Colonic mucosa (tissue), 4 donors: ENCODE measurements at regions of chr1 and their contacts with region 1.

Region 1: DNA sequence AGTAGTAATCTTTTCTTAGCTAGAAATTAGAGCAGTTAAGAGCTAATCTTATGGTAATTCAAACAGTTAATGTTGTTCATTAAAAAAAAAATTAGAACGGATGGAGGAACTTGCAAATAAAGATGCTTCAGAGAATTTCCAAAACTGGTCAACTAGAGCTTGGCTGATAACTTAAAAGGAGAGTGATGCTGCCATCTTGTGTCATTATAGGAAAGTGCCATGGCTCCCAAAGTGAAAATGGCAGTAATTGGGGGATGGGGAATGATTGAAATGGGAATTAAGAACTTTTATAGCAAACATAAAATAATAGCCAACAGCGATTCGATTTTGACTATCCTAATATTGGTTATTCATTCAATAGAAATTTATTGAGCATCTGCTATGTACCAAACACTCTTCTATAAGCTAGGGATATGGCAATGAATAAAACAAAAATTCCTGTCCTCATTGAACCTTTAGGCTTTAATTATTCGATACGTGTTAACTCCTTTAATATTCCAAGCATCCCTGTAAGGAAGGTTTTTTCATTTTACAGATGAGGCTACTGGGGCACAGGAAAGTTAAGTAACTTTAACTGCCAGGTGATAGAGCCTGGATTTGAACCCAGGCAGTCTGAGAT is 5.7 kb upstream of the PLPP3 start:
- DNase-seq: peak; percentile 43
- H3K4me3 ChIP-seq: no peak overlapping the region
- H3K27ac ChIP-seq: no peak overlapping the region
- H3K4me1 ChIP-seq: no peaks in the 10 kb centered on the region
- H3K27me3 ChIP-seq: no peaks in the 10 kb centered on the region
- CTCF ChIP-seq: peak; percentile 78

Region 2: DNA sequence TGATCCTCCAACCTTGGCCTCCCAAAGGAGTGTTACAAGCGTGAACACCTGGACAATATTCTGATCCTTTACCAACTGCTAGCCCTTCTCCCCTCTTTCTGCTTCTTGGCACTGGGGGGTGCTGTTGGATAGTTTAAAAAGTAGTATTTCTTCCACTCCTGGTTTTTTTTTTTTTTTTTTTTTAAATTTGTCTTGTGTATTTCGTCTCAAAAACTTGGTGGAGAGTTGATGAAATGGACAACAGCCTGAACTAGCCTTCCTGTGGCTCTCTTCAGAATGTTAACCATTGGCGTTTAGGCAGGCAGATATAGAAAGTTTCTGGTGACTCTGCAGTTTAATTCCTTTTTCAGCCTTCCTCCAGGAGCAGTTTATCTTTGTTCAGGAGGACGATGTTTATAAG is 1300.2 kb before region 1 on chr1:
- intact Hi-C with region 1: loop called (anchors 5 kb)
- DNase-seq: peak; percentile 37
- H3K4me3 ChIP-seq: no peak overlapping the region
- H3K27ac ChIP-seq: no peak overlapping the region
- H3K4me1 ChIP-seq: no peaks in the 10 kb centered on the region
- H3K27me3 ChIP-seq: no peaks in the 10 kb centered on the region
- CTCF ChIP-seq: peak; percentile 38

Region 3: GRCh38 chr1:55375617-55376258 is 1209.3 kb before region 1 on chr1:
- intact Hi-C with region 1: loop called (anchors 5 kb)
- DNase-seq: peak; percentile 55
- H3K4me3 ChIP-seq: no peak overlapping the region
- H3K27ac ChIP-seq: no peak overlapping the region
- H3K4me1 ChIP-seq: no peaks in the 10 kb centered on the region
- H3K27me3 ChIP-seq: no peaks in the 10 kb centered on the region
- CTCF ChIP-seq: peak; percentile 91

Region 4: GRCh38 chr1:55478742-55479141 is 1106.3 kb before region 1 on chr1:
- intact Hi-C with region 1: loop called (anchors 10 kb)
- DNase-seq: no peak
- H3K4me3 ChIP-seq: no peak overlapping the region
- H3K27ac ChIP-seq: no peak overlapping the region
- H3K4me1 ChIP-seq: peaks cover 3% of the 10 kb centered on the region
- H3K27me3 ChIP-seq: no peaks in the 10 kb centered on the region
- CTCF ChIP-seq: no peak

Region 5: GRCh38 chr1:56237491-56238064 is 347.4 kb before region 1 on chr1:
- intact Hi-C with region 1: no loop called
- DNase-seq: no peak
- H3K4me3 ChIP-seq: no peak overlapping the region
- H3K27ac ChIP-seq: no peak overlapping the region
- H3K4me1 ChIP-seq: no peaks in the 10 kb centered on the region
- H3K27me3 ChIP-seq: no peaks in the 10 kb centered on the region
- CTCF ChIP-seq: no peak

Region 6: DNA sequence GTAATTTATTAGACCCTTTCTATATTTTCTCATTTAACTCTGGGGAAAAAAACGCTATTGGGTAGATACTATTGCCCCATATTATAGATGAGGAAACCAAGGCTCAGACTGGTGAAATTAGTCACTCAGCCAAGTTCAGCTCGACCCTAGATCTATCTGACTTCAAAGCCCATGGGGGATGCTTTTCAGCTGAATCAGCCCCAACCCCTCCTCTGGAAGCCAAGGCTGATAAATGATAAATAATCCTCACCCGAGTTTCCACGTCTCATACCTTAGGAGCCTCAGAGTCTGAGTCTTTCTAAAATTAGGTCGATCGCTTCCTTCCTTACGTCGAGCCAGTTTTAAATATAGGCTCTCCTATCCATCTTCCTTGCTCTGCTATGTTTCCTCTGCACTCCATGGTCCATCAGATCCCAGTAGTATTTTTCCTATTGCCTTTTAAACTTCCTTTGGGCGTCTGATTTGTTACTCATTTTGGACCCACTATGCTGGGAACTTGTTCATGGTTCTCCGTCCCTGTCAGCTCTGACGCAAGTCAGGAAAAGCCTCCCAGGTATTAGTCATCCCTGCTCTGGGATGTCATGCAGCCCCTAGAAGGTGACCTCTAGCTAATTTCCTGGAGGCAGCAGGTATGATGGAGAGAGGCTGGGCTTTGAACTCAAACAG is 128.4 kb before region 1 on chr1:
- intact Hi-C with region 1: no loop called
- DNase-seq: no peak
- H3K4me3 ChIP-seq: no peak overlapping the region
- H3K27ac ChIP-seq: no peak overlapping the region
- H3K4me1 ChIP-seq: no peaks in the 10 kb centered on the region
- H3K27me3 ChIP-seq: no peaks in the 10 kb centered on the region
- CTCF ChIP-seq: no peak

Region 7: DNA sequence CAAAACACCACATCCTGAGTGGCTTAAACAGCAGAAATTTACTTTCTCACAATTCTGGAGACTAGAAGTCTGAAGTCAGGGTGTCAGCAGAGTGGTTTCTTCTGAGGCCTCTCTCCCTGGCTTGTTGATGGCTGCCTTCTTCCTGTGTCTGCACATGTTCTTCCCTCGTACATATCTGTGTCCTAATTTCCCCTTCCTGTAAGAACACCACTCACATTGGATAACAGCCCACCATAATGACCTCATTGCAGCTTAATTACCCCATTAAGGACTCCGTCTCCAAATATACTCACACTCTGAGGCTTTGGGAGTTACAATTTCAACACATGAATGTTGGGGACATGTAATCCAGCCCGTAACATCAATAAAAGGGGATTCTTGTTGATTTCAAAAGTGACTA is 293.0 kb after region 1 on chr1:
- intact Hi-C with region 1: no loop called
- DNase-seq: no peak
- H3K4me3 ChIP-seq: no peak overlapping the region
- H3K27ac ChIP-seq: no peak overlapping the region
- H3K4me1 ChIP-seq: no peaks in the 10 kb centered on the region
- H3K27me3 ChIP-seq: no peaks in the 10 kb centered on the region
- CTCF ChIP-seq: no peak